AG04449 (cell line): ENCODE measurements at regions of chrX and their contacts with region 1.

Region 1: DNA sequence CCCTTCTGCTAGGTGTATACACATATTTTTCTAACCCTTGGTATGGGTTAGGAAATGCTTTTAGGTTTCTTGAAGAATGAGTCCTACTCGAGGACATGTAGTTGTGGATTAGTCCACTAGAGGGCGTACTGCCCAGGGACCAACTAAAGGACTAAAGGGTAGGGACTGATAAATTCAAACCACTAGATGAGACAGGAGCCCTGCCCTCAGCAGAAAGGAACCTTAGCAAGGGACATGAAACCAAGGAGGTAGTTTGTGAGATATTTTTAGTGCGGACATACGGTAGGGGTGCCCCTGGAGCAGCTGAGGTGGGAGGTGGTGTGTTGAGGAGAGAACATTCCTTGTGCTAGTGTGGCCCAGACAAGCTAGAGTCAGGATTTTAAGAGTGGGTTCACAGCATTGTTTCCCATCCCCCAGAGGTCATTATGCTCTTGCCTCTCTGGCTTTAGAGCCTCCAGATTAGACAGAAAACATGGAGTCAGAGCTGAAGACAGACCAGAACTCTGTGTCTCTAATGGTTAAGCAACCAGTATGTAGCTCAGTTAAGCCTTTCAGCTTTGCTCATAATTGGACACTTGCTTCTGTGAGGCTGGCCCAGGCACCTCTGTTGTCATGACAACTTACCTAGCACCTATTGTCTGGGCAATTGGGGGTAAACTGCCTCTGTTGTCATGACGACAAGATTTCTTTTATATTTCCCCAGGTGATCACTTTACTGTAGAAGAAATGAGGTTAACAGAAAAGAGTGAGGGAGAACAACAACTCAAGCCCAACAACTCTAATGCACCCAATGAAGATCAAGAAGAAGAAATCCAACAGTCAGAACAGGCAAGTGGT is 1.0 kb downstream of the TMEM31 start:
- DNase-seq: no peak
- H3K4me3 ChIP-seq: no peak overlapping the region
- CTCF ChIP-seq: peak; percentile 55

Region 2: DNA sequence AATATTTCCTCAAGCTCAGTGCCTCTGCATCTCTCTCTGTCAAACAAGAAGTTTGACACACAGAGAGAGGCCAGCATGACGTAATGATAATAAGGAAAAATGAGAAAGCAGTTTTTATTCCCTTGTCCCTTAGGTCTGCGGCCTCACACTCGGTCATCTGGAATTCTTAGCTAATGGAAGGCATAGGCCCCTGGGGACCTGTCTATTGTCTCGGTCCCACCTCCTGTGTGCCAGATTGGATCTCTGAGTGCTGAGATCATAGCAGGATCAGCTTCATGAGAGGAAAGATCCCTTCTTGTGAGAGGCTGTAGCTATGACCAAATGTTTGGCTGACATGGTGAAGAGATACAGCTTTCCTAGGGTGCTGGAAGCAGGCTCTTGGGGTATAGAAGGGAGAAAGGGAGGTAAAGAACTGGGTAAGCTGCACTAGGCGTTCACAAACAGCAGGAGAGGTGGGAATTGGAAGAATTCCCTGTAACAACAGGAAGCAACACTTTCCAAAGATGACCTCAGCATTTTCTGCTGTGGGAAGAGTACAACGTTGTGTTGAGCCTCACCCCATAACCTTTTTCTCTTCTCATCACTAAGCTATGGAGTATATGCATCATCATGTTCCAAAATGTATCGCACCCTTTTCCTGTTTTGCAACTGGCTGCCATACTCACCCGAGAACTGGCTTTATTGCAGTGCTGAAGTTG is 19.2 kb after region 1 on chrX:
- CTCF ChIA-PET with region 1: interaction called, 20 read pairs
- POLR2A ChIA-PET with region 1: no interaction called
- DNase-seq: peak; percentile 49
- H3K4me3 ChIP-seq: no peak overlapping the region
- CTCF ChIP-seq: no peak

Region 3: GRCh38 chrX:103774070-103774642 is 62.4 kb after region 1 on chrX:
- CTCF ChIA-PET with region 1: interaction called, 45 read pairs
- POLR2A ChIA-PET with region 1: no interaction called
- DNase-seq: no peak
- H3K4me3 ChIP-seq: no peak overlapping the region
- CTCF ChIP-seq: peak; percentile 36